Cardiac septum (tissue), 1 donor: ENCODE measurements at regions of chr20 and their contacts with region 1.

Region 1: DNA sequence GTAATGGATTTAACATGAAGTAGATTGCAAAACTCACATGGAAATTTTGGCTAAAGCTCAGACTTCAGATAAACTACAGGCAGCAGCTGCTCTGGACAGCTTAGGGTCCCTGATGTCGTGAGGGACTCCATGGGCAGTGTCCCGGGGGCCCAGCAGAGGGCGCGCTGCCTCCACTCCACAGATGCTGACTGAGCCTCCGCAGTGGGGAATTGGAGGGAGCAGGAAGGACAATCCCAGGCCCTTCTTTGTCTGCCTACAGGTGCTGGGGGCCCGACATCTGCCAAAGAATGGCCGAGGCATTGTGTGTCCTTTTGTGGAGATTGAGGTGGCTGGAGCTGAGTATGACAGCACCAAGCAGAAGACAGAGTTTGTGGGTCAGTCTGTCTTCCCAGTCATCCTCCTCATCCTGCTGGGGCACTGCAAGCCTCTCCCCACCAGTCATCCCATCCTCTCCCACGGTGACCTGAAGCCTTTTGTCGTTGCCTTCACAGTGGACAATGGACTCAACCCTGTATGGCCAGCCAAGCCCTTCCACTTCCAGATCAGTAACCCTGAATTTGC is 35.9 kb downstream of the PLCG1 start:
- DNase-seq: peak; percentile 90

Region 2: GRCh38 chr20:41078329-41078728 is 94.9 kb before region 1 on chr20:
- intact Hi-C with region 1: no loop called
- DNase-seq: no peak

Region 3: DNA sequence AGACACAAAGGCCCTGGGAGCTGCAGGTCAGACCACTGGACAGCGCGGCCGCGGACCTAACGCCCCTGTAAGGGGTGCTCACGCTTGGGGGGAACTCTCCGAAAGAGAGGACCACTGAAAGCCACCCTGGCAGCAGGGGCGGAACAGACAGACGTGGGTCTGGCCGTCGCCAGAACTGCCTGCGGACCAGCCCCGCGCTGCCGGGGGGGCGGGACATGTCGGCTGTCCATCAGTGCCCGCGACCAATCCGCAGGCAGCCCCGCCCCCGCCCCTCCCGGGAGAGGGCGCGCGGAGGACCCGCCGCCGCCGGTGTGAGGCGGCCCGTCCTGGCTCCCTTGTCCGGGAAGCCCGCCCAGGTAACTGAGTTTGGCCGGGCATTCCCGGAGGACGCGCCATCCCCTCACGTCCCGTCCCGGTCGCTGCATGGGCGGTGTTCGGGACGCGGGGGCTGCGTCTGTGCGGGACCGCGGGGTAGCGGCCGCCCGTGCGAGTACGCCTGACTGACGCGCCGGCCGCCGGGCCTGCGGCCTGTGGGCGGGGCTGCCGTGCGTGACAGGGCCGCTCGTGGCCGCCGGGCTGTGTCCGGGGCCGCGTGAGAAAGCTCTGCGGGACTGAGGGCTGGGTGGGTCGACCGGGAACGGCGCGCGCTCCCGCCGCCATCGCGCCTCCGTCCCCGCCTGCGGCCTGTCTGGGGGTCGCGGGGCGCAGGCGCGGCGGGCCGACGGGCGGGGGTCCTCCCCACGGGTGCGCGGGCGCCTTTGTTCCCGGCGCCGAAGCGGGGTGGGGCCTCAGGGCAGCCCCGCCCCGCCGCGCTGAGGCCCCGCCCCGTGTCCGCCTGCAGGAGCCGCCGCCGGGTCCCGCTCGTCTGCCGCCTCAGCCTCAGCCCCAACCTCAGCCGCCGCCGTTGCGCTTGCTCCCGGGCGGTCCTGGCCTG is 36.3 kb before region 1 on chr20 and contains the start of gene PLCG1:
- intact Hi-C with region 1: loop called (anchors 5 kb)
- DNase-seq: peak; percentile 94
- total RNA-seq, gene PLCG1: 66.6 TPM

Region 4: DNA sequence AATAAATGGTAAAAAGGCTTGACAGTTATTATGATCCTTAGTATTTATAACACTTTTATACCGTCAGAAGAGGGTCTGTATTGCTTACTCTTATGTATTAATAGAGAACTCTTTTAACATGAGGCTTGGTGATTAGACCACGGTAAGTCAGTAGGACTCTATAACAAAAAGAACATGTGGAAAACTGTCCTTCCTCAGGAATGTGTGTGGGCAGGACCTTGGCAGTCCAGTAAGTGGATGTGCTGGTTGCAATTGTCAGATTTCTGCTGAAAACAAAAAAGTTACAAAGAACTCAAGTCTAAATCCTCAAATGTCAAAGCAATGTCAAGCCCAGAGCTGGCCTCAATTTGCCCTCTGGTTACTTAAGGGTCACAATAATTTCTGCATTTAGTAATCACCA is 45.2 kb after region 1 on chr20:
- intact Hi-C with region 1: no loop called
- DNase-seq: no peak

Region 5: DNA sequence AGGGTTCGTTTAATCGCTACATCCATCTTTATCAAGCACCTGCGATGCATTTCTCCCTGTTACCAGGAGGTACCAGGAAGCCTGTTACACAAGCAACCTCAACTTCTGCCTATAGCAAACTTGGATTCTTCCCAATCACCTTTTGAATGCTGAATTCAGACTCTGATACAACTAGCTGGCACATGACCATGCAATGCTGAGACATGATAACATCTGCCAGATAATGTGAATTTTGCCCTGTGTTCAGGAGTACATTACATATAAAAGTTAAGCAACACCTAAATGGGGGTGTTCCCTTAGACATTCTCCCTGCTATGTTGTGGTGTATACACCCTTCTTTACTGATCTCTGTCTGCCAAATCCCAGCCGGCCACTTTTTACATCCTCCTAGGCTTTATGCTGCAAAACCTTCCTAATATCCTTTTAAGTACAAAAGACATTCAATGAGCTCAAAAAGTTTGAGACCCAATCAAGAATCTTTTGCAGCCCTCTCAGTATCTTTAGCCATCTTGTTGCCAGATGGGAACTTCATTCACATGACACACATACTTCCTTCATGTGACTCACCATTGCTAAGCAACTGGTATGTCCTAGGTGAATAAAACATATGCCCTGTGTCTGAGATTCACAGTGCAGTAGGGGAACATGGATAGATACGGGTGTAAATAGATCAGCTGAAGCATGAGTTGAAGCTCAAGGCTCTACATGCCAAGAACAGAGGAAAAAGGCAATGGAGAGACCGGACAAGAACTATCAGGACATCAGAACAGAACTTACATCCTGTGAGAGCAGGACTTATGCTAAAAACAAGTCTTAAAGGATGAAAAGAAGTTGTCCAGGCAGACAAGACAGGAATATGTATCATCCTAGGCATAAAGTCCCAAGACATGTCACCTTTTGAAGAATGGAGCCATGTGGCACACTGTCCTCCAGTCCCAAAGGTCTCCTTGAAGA is 60.0 kb after region 1 on chr20:
- intact Hi-C with region 1: loop called (anchors 1 kb)
- DNase-seq: no peak

Region 6: DNA sequence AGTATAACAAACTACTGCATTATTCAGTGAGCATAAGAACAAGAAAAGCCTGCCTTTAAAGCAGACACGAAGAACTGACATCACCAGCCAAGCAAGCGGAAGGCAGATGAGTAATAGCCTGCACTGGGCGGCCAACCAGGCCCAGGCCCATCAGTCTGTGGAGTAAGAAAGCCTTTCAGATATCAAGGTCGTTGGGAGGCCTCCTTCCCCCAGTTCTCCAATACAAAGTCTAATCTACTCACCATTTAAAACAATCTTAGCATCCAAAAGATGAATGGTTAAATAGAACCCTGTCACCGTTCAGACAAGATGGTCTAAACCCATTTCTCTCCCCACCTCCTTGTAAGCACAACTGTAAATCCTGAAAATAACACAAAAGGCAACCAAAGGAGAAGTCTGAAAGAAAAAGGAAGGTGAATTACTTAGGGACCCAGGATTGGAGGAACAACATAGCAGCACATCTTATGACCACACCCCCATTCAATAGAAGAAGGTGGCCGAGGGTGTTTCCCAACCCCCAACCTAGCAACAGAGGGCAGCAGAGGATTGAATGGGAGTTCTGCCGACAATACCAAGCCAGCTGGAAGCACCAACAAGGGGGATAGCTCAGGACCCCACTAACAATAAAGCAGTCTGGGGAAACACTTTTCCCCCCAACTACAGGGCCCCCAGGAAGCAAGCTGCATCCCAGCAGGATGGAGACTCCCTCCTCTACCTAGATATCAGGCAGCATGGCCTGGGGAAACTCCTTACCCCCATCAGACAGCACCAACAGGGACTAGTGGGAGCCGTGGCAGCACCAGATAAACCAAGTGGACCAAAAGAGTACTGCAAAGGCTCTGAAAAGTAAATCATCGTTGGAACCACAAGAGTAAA is 76.4 kb after region 1 on chr20:
- intact Hi-C with region 1: loop called (anchors 5 kb)
- DNase-seq: peak; percentile 82

Region 7: GRCh38 chr20:41317536-41318270 is 144.5 kb after region 1 on chr20 and contains the start of gene ZHX3:
- intact Hi-C with region 1: loop called (anchors 5 kb)
- DNase-seq: peak; percentile 97
- total RNA-seq, gene ZHX3: 33.2 TPM

Region 8: GRCh38 chr20:41339507-41340326 is 166.5 kb after region 1 on chr20:
- intact Hi-C with region 1: loop called (anchors 1 kb)
- DNase-seq: peak; percentile 89

Region 9: GRCh38 chr20:41411391-41411847 is 238.2 kb after region 1 on chr20:
- intact Hi-C with region 1: loop called (anchors 5 kb)
- DNase-seq: no peak